Activated CD4-positive, alpha-beta T cell treated with anti-CD3 and anti-CD28 coated beads, Interleukin-2, amount 10 ng/mL, durations not matched to agents 24 days and 14 days (primary cell): ENCODE measurements at regions of chr7 and their contacts with region 1.

Region 1: GRCh38 chr7:155344600-155345433 is 47.1 kb downstream of the INSIG1 start:
- DNase-seq: peak; percentile 96
- H3K4me3 Mint-ChIP-seq: peak overlapping the region; percentile 80
- H3K27ac Mint-ChIP-seq: no peak overlapping the region
- H3K4me1 Mint-ChIP-seq: peaks cover 11% of the 10 kb centered on the region
- H3K27me3 Mint-ChIP-seq: peaks cover 29% of the 10 kb centered on the region

Region 2: DNA sequence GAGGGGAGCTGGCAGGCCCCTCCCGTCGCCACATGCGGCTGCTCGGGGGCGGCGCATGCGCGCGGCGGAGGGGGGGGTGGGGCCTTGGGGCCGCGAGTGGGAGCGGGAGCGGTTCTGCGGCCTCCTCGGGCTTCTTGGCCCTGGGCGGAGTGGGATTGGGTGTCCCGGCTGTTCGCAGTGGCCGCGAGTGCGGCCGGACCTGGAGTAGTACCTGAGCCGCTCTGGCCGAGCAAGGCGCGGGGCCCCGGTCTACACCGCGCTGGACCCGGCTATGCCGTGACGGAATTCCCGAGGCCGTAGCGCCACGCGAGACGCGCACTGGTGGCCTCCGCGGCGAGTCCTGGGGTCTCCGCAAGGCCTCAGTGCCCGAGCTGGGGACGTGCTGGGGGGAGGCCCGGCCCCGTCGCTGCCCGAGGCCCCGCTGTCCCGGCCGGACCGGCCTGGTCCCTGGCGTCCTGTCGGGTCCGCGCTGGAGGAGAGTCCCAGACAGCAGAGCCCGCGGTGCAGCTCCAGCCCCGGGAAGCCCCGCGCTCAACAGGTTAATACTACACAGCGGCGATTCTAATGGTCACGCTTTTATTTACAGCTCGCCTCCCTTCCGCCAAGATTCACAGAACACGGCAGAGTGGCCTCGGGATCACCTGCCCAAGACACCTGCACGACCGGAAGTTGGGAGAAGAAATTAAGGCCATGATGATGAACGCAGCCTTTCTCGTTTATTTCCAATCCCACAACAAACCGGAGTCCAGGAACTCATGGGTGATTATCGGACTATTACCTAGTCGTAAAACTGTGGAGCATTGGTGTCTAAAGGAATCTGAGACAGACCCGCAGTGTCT is 341.2 kb before region 1 on chr7:
- intact Hi-C with region 1: loop called (anchors 10 kb)
- DNase-seq: peak; percentile 94
- H3K4me3 Mint-ChIP-seq: peak overlapping the region; percentile 94
- H3K27ac Mint-ChIP-seq: peak overlapping the region; percentile 94
- H3K4me1 Mint-ChIP-seq: peaks cover 9% of the 10 kb centered on the region
- H3K27me3 Mint-ChIP-seq: no peaks in the 10 kb centered on the region

Region 3: DNA sequence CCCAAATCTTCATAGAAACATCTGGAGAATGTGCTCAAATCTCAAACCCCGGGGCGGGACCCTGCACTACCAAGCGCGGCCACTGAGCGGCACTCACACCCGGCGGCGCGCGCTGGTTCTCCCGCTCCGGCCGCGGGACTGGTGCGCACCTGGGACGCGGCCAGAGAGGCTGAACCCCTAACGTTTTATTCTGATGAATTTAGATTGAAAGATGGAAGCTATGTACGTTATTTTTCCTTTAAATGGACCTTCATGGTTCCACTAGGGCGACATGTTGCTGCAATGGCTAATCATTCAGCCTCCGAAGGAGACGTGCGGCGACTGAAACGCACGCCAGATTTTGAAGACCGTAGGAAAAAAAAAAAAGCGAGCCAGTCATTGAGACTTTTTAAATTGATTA is 154.1 kb before region 1 on chr7:
- intact Hi-C with region 1: loop called (anchors 1 kb)
- DNase-seq: peak; percentile 91
- H3K4me3 Mint-ChIP-seq: peak overlapping the region; percentile 61
- H3K27ac Mint-ChIP-seq: no peak overlapping the region
- H3K4me1 Mint-ChIP-seq: peaks cover 17% of the 10 kb centered on the region
- H3K27me3 Mint-ChIP-seq: peaks cover 5% of the 10 kb centered on the region

Region 4: GRCh38 chr7:155205368-155206317 is 139.2 kb before region 1 on chr7:
- intact Hi-C with region 1: loop called (anchors 2 kb)
- DNase-seq: peak; percentile 96
- H3K4me3 Mint-ChIP-seq: peak overlapping the region; percentile 85
- H3K27ac Mint-ChIP-seq: peak overlapping the region; percentile 96
- H3K4me1 Mint-ChIP-seq: peaks cover 34% of the 10 kb centered on the region
- H3K27me3 Mint-ChIP-seq: no peaks in the 10 kb centered on the region

Region 5: GRCh38 chr7:155216293-155217272 is 128.2 kb before region 1 on chr7:
- intact Hi-C with region 1: no loop called
- DNase-seq: no peak
- H3K4me3 Mint-ChIP-seq: no peak overlapping the region
- H3K27ac Mint-ChIP-seq: no peak overlapping the region
- H3K4me1 Mint-ChIP-seq: peaks cover 9% of the 10 kb centered on the region
- H3K27me3 Mint-ChIP-seq: peaks cover 5% of the 10 kb centered on the region

Region 6: GRCh38 chr7:155283565-155284194 is 61.1 kb before region 1 on chr7:
- intact Hi-C with region 1: loop called (anchors 1 kb)
- DNase-seq: peak; percentile 63
- H3K4me3 Mint-ChIP-seq: peak overlapping the region; percentile 3
- H3K27ac Mint-ChIP-seq: peak overlapping the region; percentile 38
- H3K4me1 Mint-ChIP-seq: peaks cover 67% of the 10 kb centered on the region
- H3K27me3 Mint-ChIP-seq: peaks cover 2% of the 10 kb centered on the region

Region 7: DNA sequence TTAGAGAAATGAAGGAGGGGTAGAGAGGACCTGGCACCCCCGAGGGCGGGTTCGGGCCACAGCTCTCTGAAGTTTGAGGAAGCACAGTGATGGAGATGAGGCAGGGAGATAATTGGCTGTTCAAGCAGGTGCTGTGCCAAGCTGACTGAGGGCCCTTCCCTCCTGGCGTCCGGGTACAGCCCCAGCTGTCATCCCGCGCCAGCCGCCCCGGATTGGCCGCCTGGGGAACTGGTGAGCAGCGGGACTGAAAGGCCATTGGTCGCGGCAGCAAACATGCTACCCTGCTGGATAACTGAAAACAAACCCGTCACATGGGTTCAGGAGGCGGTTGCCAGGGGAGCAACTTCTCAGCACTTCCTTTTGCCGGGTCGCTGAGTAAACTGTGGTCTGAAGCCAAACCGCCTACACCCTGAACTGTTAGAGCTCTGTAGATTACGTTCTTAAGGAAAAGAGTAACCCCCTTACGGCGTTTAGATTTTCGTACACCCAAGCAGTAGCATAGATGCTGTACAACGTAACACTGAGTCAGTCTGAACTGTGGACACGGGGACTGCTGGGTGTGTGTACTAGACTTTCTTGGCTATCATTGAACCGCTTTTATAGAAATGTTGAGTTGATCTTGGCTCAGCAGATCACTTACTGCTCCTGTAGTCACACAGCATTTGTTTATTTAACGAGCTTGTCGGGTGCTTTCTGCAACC is 45.8 kb before region 1 on chr7:
- intact Hi-C with region 1: loop called (anchors 1 kb)
- DNase-seq: peak; percentile 99
- H3K4me3 Mint-ChIP-seq: peak overlapping the region; percentile 94
- H3K27ac Mint-ChIP-seq: peak overlapping the region; percentile 97
- H3K4me1 Mint-ChIP-seq: peaks cover 42% of the 10 kb centered on the region
- H3K27me3 Mint-ChIP-seq: no peaks in the 10 kb centered on the region

Region 8: GRCh38 chr7:155333346-155334234 is 11.2 kb before region 1 on chr7:
- intact Hi-C with region 1: no loop called
- DNase-seq: no peak
- H3K4me3 Mint-ChIP-seq: no peak overlapping the region
- H3K27ac Mint-ChIP-seq: no peak overlapping the region
- H3K4me1 Mint-ChIP-seq: no peaks in the 10 kb centered on the region
- H3K27me3 Mint-ChIP-seq: peaks cover 8% of the 10 kb centered on the region